ENCODE measurements at regions of chr4 and their contacts with region 1.

Region 1: DNA sequence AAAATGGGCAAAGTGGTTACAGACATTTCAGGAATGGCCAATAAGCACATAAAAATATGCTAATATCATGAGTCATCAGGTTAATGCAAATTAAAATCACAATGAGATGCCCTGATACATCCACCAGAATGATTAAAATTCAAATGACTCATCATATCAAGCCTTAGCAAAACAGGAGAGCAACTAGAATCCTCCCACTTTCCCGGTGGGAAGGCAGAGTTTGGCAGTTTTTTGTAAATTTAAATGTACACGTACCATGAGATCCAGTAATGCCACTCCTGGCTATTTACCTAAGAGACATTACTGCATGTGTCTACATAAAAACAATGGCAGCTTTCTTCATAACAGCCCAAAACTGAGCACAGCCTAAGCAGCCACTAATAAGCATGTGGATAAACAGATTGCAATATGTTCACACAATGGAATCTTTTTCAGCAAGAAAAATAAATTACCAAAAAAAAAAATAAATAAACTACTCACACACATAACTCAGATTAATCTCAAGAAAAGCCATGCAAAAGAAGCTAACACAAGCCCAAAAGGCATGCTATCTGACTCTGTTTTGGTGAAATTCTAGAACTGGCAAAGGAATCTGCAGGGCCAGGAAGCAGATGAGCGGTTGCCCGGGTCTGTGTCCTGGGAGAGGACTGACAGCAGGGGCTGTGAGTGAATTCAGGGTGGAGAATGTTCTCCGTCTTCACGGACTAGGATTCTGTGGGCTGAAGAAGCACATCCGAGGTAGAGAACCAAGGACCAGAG is 48.8 kb downstream of the AFAP1 start:
- DNase-seq: no peak
- H3K4me3 ChIP-seq: no peak overlapping the region
- H3K27ac ChIP-seq: peak overlapping the region; percentile 37 to 66 (median 48)
- H3K4me1 ChIP-seq: peaks cover 11 to 40% (median 22%) of the 10 kb centered on the region in 4 donors
- H3K27me3 ChIP-seq: no peaks in the 10 kb centered on the region
- CTCF ChIP-seq: no peak
- EP300 ChIP-seq: no peak
- POLR2A ChIP-seq: no peak

Region 2: DNA sequence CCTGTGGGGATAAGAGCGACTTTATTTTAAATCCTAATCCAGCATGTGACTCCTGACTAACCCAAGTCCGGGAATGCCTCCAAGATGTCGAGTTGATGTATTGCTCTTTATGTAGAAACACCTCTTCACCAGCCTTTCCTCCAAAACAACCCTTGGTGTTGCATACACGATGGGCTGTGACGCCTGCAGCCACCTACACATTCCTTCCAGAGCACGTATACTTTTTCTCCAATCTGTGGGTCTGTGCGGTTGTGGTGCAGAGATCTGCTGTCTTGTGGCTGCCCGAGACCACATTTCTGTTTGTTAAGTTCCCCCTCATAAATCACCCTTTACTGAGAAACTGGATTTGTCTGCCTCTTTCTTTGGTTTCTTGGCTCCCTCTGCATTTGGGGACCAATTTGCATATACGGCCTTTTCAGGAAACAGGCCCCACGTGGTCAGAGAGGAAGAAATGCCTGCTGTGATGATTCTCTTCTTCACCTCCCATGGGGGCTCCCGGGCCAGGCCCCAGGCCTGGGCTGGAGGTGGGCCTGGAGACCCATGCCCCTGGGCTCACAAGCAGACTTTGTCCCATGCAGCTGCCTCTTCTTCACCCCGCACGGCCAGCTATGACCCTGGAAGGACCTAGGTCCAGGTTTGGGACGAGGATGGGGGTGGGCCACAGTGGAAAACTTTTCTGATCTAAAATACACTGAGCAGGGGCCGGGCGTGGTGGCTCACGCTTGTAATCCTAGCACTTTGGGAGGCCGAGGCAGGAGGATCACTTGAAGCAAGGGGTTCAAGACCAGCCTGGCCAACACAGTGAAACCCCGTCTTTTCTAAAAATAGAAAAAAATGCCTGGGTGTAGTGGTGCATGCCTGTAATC is 70.2 kb after region 1 on chr4:
- in situ Hi-C with region 1: no loop called
- intact Hi-C with region 1: loop called (anchors 10 kb)
- DNase-seq: no peak
- H3K4me3 ChIP-seq: no peak overlapping the region
- H3K27ac ChIP-seq: peak overlapping the region; percentile 72 to 81 (median 78)
- H3K4me1 ChIP-seq: peaks cover 12 to 58% (median 27%) of the 10 kb centered on the region in 4 donors
- H3K27me3 ChIP-seq: no peaks in the 10 kb centered on the region
- CTCF ChIP-seq: no peak
- EP300 ChIP-seq: no peak
- POLR2A ChIP-seq: no peak

Measured in transverse colon (tissue), 4 donors.